Naive thymus-derived CD4-positive, alpha-beta T cell (primary cell): ENCODE measurements at regions of chr13 and their contacts with region 1.

Region 1: DNA sequence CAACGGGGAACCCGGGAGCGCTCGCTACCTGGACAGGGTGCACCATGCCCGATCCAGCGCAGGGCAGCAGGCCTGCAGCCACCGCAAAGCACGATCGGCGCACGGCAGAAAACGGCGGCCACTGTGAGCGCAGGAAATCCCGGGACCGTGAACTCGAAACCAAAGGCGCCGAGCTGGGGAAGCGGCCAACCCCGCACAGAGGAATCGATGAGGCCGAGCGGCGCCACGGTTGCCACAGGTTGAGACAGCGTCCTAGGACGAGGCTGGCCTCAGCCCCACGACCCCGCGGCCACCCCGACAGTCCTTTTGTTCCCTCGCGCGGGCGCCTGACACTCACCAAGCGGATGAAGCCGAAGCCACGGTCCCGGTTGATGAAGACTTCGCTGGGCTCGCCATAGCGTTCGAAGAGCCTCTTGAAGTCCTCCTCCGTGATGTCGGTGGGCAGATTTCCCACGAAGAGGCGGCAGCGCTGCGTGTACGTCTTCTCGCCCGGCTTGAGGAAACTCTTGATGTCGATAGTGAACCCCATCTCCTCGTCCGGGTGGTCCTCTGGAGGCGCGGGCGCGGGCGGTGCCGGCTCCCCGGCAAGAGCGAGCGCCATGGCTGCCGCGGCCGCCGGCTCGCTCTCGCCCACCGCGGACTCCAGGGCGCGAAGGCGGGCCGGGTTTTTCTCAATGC is 557 bp downstream of the PSPC1 start:
- DNase-seq: peak; percentile 26 to 61 (median 49)
- ATAC-seq: peak; percentile 63
- H3K4me3 ChIP-seq: peak overlapping the region; percentile 99
- H3K4me3 Mint-ChIP-seq: peak overlapping the region; percentile 96 to 100 (median 98)
- H3K27ac ChIP-seq: peak overlapping the region; percentile 98
- H3K27ac Mint-ChIP-seq: peak overlapping the region; percentile 96 to 100 (median 99)
- H3K4me1 ChIP-seq: peaks cover 0 to 8% of the 10 kb centered on the region in 2 donors
- H3K4me1 Mint-ChIP-seq: peaks cover 0 to 13% (median 10%) of the 10 kb centered on the region in 7 donors
- H3K27me3 ChIP-seq: no peaks in the 10 kb centered on the region
- H3K27me3 Mint-ChIP-seq: peaks cover 0 to 5% (median 0%) of the 10 kb centered on the region in 5 donors

Region 2: DNA sequence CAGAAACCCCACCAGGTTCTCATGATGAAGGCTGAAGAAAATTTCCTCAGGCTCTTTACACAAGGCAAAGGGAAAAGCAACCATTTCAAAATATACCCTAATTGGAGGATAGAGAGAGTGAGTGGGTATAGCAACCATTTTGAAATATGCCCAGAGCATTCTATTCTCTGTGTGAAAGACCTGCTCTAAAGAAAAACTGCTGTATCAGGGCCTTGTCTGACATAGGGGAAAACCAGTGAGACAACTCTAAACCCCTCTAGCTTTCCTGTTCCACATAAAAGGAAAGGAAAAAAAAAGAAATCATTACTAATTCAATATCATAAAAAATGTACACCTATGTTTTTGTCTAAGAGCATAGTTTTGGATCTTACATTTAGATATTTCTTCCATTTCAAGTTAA is 263.1 kb before region 1 on chr13:
- CTCF ChIA-PET with region 1: no interaction called
- POLR2A ChIA-PET with region 1: no interaction called
- intact Hi-C with region 1: no loop called
- DNase-seq: no peak
- ATAC-seq: no peak
- H3K4me3 ChIP-seq: no peak overlapping the region
- H3K4me3 Mint-ChIP-seq: no peak overlapping the region
- H3K27ac ChIP-seq: no peak overlapping the region
- H3K27ac Mint-ChIP-seq: no peak overlapping the region
- H3K4me1 ChIP-seq: no peaks in the 10 kb centered on the region
- H3K4me1 Mint-ChIP-seq: peaks cover 0 to 18% (median 7%) of the 10 kb centered on the region in 7 donors
- H3K27me3 ChIP-seq: no peaks in the 10 kb centered on the region
- H3K27me3 Mint-ChIP-seq: peaks cover 0 to 10% (median 3%) of the 10 kb centered on the region in 5 donors

Region 3: GRCh38 chr13:19587635-19588300 is 194.4 kb before region 1 on chr13:
- CTCF ChIA-PET with region 1: no interaction called
- POLR2A ChIA-PET with region 1: no interaction called
- intact Hi-C with region 1: loop called in 1 of 2 experiments (anchors 1 kb)
- DNase-seq: peak in 7 of 9 donors; percentile 14 to 58 (median 42)
- ATAC-seq: peak; percentile 48
- H3K4me3 ChIP-seq: peak overlapping the region; percentile 36
- H3K4me3 Mint-ChIP-seq: peak overlapping the region; percentile 68 to 89 (median 80)
- H3K27ac ChIP-seq: peak overlapping the region; percentile 31
- H3K27ac Mint-ChIP-seq: peak overlapping the region; percentile 76 to 94 (median 86)
- H3K4me1 ChIP-seq: peaks cover 6 to 17% of the 10 kb centered on the region in 2 donors
- H3K4me1 Mint-ChIP-seq: peaks cover 14 to 32% (median 25%) of the 10 kb centered on the region in 7 donors
- H3K27me3 ChIP-seq: no peaks in the 10 kb centered on the region
- H3K27me3 Mint-ChIP-seq: peaks cover 0 to 9% (median 0%) of the 10 kb centered on the region in 5 donors

Region 4: GRCh38 chr13:19633479-19634255 is 148.5 kb before region 1 on chr13 and contains the start of gene MPHOSPH8:
- CTCF ChIA-PET with region 1: no interaction called
- POLR2A ChIA-PET with region 1: interaction called, 4 read pairs
- intact Hi-C with region 1: loop called (anchors 1 kb)
- DNase-seq: peak; percentile 82 to 94 (median 92)
- ATAC-seq: peak; percentile 99
- H3K4me3 ChIP-seq: peak within 1 kb of the TSS; percentile 83
- H3K4me3 Mint-ChIP-seq: peak within 1 kb of the TSS; percentile 96 to 100 (median 100)
- H3K27ac ChIP-seq: peak within 1 kb of the TSS; percentile 91
- H3K27ac Mint-ChIP-seq: peak within 1 kb of the TSS; percentile 98 to 100 (median 99)
- H3K4me1 ChIP-seq: peaks cover 20 to 28% of the 10 kb centered on the region in 2 donors
- H3K4me1 Mint-ChIP-seq: peaks cover 29 to 42% (median 34%) of the 10 kb centered on the region in 7 donors
- H3K27me3 ChIP-seq: no peaks in the 10 kb centered on the region
- H3K27me3 Mint-ChIP-seq: peaks cover 0 to 3% (median 0%) of the 10 kb centered on the region in 5 donors
- total RNA-seq, gene MPHOSPH8: 50.6 to 131 (median 65.6) TPM

Region 5: DNA sequence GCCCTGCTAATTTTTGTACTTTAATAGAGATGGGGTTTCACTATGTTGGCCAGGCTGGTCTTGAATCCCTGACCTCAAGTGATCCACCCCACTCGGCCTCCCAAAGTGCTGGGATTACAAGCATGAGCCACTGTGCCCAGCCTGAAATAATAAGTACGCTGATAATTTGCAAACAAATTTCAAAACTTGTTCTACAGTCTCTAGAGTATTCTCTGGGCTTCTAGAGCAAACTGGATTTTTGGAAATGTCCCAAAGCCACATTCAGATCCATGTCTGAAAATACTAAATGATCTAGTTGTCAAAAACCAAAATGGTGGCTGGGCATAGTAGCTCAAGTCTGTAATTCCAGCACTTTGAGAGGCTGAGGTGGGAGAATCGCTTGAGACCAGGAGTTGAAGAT is 40.5 kb after region 1 on chr13:
- CTCF ChIA-PET with region 1: no interaction called
- POLR2A ChIA-PET with region 1: no interaction called
- intact Hi-C with region 1: loop called in 1 of 2 experiments (anchors 5 kb)
- DNase-seq: no peak
- ATAC-seq: no peak
- H3K4me3 ChIP-seq: no peak overlapping the region
- H3K4me3 Mint-ChIP-seq: no peak overlapping the region
- H3K27ac ChIP-seq: no peak overlapping the region
- H3K27ac Mint-ChIP-seq: no peak overlapping the region
- H3K4me1 ChIP-seq: no peaks in the 10 kb centered on the region
- H3K4me1 Mint-ChIP-seq: peaks cover 0 to 2% (median 0%) of the 10 kb centered on the region in 7 donors
- H3K27me3 ChIP-seq: no peaks in the 10 kb centered on the region
- H3K27me3 Mint-ChIP-seq: no peaks in the 10 kb centered on the region

Region 6: DNA sequence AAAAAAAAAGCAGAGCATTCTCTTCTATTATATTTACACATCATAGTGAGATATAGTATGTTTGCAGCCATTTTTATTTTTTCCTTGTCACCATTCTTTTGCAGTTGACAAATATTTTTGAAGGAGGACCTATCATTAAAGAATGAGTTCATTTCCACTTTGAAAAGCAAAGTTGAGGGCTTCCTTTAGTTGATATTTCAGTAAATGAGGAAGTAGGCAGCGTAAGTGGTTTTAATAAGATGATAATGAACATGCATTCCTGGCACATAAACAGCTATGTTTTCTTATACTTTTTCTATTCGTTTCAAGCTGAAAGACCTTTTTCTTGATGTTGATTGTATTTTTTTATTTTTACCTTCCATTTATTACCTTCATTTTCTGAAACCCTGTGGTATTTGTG is 242.5 kb after region 1 on chr13:
- CTCF ChIA-PET with region 1: no interaction called
- POLR2A ChIA-PET with region 1: no interaction called
- intact Hi-C with region 1: no loop called
- DNase-seq: no peak
- ATAC-seq: no peak
- H3K4me3 ChIP-seq: no peak overlapping the region
- H3K4me3 Mint-ChIP-seq: no peak overlapping the region
- H3K27ac ChIP-seq: no peak overlapping the region
- H3K27ac Mint-ChIP-seq: no peak overlapping the region
- H3K4me1 ChIP-seq: no peaks in the 10 kb centered on the region
- H3K4me1 Mint-ChIP-seq: peaks cover 7 to 21% (median 13%) of the 10 kb centered on the region in 7 donors
- H3K27me3 ChIP-seq: no peaks in the 10 kb centered on the region
- H3K27me3 Mint-ChIP-seq: no peaks in the 10 kb centered on the region